CD4-positive, alpha-beta memory T cell (primary cell): ENCODE measurements at regions of chr7 and their contacts with region 1.

Region 1: DNA sequence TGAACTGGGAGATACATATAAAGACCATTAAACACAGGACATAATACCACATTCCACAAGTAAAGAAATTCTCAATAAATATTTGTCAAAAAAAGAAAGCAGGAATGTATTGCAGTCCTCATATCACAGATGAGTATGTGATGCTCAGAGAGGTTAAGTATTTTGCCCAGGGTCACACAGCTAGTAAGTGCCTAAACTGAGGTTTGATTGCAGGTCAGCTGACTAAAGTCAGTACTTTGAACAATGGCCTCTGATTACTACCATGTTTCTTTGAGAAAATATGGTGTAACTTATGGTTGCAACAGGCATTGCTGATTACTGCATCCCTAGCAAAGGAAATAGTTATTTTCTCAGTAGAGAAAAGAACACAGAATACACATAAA is 267.1 kb downstream of the ELMO1 start:
- DNase-seq: no peak
- H3K4me3 ChIP-seq: no peak overlapping the region
- H3K4me3 Mint-ChIP-seq: no peak overlapping the region
- H3K27ac ChIP-seq: no peak overlapping the region
- H3K27ac Mint-ChIP-seq: peak overlapping the region in 1 of 7 donors; percentile 47
- H3K4me1 ChIP-seq: no peaks in the 10 kb centered on the region
- H3K4me1 Mint-ChIP-seq: peaks cover 3 to 12% (median 6%) of the 10 kb centered on the region in 4 donors
- H3K27me3 ChIP-seq: no peaks in the 10 kb centered on the region
- H3K27me3 Mint-ChIP-seq: no peaks in the 10 kb centered on the region

Region 2: DNA sequence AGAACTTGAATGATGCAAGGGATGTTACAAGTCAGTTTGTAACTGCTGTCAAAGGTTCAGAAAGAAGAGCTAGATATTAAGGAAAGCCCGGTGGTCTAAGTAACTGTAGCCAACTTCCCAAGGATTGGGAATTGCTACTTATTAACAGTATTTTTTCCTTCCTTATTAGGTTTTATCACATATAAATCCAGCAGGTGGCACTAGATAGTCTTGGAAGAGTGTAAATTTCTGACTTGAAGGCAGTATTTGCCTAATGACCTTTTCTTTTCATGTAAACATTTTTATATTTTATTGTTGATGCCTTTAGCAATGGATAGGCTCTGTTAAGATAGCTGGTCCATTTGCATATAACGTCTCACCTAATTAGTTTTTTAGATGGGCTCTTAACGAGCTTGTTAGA is 740.7 kb before region 1 on chr7:
- CTCF ChIA-PET with region 1: interaction called, 29 read pairs
- POLR2A ChIA-PET with region 1: no interaction called
- intact Hi-C with region 1: loop called (anchors 1 kb)
- DNase-seq: peak in 4 of 5 donors; percentile 1 to 24 (median 6)
- H3K4me3 ChIP-seq: no peak overlapping the region
- H3K4me3 Mint-ChIP-seq: no peak overlapping the region
- H3K27ac ChIP-seq: no peak overlapping the region
- H3K27ac Mint-ChIP-seq: no peak overlapping the region
- H3K4me1 ChIP-seq: no peaks in the 10 kb centered on the region
- H3K4me1 Mint-ChIP-seq: no peaks in the 10 kb centered on the region
- H3K27me3 ChIP-seq: no peaks in the 10 kb centered on the region
- H3K27me3 Mint-ChIP-seq: no peaks in the 10 kb centered on the region

Region 3: GRCh38 chr7:36487756-36488336 is 693.7 kb before region 1 on chr7:
- CTCF ChIA-PET with region 1: interaction called, 207 read pairs
- POLR2A ChIA-PET with region 1: interaction called, 9 read pairs
- intact Hi-C with region 1: loop called (anchors 1 kb)
- DNase-seq: peak; percentile 43 to 61 (median 59)
- H3K4me3 ChIP-seq: no peak overlapping the region
- H3K4me3 Mint-ChIP-seq: no peak overlapping the region
- H3K27ac ChIP-seq: no peak overlapping the region
- H3K27ac Mint-ChIP-seq: no peak overlapping the region
- H3K4me1 ChIP-seq: no peaks in the 10 kb centered on the region
- H3K4me1 Mint-ChIP-seq: peaks cover 0 to 2% (median 0%) of the 10 kb centered on the region in 4 donors
- H3K27me3 ChIP-seq: no peaks in the 10 kb centered on the region
- H3K27me3 Mint-ChIP-seq: peaks cover 0 to 1% of the 10 kb centered on the region in 2 donors

Region 4: DNA sequence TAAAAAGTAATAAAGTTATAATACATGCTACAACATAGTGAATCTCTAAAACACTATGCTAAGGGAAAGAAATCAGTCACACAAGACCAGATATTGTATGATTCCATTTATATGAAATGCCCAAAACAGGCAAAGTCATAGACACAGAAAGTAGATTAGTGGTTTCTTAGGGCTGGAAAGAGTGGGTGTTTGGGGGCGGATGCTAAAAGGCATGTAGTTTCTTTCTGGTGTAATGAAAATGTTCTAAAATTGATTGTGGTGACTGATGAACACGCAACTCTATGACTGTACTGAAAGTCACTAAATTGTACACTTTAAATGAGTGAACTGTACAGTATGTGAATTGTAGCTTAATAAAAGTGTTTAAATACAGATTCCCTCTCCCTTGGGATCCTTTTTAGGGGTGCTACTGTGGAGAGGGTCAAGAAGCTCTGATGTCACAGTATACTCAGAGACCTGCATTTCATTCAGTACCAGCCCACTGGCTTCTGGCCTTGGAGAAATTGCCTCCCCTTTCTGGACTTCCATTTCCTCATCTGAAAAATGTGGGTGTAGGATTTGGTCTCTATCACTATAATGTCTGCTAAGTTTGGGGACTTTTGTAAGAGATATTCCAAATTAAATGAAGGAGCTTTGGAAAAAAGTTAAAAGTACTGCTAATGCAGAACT is 503.6 kb before region 1 on chr7:
- CTCF ChIA-PET with region 1: interaction called, 36 read pairs
- POLR2A ChIA-PET with region 1: interaction called, 5 read pairs
- intact Hi-C with region 1: loop called (anchors 2 kb)
- DNase-seq: peak in 2 of 5 donors; percentile 10 to 11
- H3K4me3 ChIP-seq: no peak overlapping the region
- H3K4me3 Mint-ChIP-seq: peak overlapping the region in 7 of 8 donors; percentile 55 to 84 (median 68)
- H3K27ac ChIP-seq: no peak overlapping the region
- H3K27ac Mint-ChIP-seq: peak overlapping the region; percentile 79 to 96 (median 89)
- H3K4me1 ChIP-seq: peaks cover 16% of the 10 kb centered on the region
- H3K4me1 Mint-ChIP-seq: peaks cover 18 to 39% (median 28%) of the 10 kb centered on the region in 4 donors
- H3K27me3 ChIP-seq: no peaks in the 10 kb centered on the region
- H3K27me3 Mint-ChIP-seq: no peaks in the 10 kb centered on the region

Region 5: DNA sequence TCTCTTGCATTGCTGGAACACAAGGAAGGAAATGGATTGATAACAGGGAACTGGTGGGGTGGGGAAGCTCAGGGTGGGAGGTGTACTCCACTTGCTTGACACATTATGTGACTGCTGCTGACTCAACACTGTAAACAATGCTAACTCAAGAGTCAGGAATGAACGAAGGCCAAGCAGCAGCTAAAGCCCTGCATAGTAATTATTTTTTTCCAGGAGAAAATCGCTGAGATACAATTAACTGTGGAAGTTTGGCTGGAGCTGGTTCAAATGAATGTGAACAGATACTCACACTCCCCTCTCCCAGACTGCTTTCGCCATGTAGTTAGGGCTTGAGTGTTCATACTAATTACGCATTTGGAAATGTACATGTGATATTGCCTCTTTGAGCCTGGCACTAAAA is 286.3 kb before region 1 on chr7:
- CTCF ChIA-PET with region 1: no interaction called
- POLR2A ChIA-PET with region 1: no interaction called
- intact Hi-C with region 1: loop called (anchors 10 kb)
- DNase-seq: no peak
- H3K4me3 ChIP-seq: no peak overlapping the region
- H3K4me3 Mint-ChIP-seq: no peak overlapping the region
- H3K27ac ChIP-seq: no peak overlapping the region
- H3K27ac Mint-ChIP-seq: peak overlapping the region in 1 of 7 donors; percentile 34
- H3K4me1 ChIP-seq: no peaks in the 10 kb centered on the region
- H3K4me1 Mint-ChIP-seq: peaks cover 8 to 17% (median 14%) of the 10 kb centered on the region in 4 donors
- H3K27me3 ChIP-seq: no peaks in the 10 kb centered on the region
- H3K27me3 Mint-ChIP-seq: no peaks in the 10 kb centered on the region

Region 6: DNA sequence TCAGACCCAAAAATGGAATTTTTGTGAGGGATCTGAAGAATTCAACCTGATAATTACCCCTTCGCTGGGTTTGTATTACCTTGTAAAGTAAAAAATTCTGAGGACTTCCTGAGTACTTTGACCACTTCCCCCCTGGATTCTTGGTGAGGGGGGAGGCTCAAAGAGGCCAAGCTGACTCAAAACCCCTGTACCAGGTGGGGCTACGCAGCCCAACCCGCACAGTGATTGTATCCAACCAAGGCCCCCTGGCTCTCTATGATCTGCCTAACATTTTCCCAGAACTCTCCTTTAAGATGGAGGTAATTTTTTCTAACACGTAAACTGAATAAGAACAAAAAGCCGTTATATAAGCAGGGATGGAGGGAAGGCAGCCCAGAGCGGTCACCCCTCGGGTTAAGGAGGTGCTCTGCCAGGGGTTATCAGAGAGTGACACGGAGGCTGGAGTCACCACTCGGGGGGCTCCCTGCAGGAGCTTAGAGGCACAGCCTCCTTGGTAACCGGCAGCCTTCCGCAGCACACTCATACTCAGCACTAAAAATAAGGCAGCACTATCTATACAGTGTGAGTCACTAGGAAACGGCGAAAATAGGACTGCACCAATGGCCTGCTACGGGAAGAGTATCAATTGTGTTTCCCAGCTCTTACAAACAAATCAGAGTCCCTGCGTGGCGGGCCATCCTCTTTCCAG is 11.7 kb after region 1 on chr7:
- CTCF ChIA-PET with region 1: interaction called, 80 read pairs
- POLR2A ChIA-PET with region 1: no interaction called
- intact Hi-C with region 1: no loop called
- DNase-seq: no peak
- H3K4me3 ChIP-seq: no peak overlapping the region
- H3K4me3 Mint-ChIP-seq: no peak overlapping the region
- H3K27ac ChIP-seq: no peak overlapping the region
- H3K27ac Mint-ChIP-seq: peak overlapping the region in 5 of 7 donors; percentile 4 to 57 (median 43)
- H3K4me1 ChIP-seq: no peaks in the 10 kb centered on the region
- H3K4me1 Mint-ChIP-seq: peaks cover 9 to 21% (median 14%) of the 10 kb centered on the region in 4 donors
- H3K27me3 ChIP-seq: no peaks in the 10 kb centered on the region
- H3K27me3 Mint-ChIP-seq: no peaks in the 10 kb centered on the region